Ascending aorta (tissue), 2 donors: ENCODE measurements at regions of chr10 and their contacts with region 1.

Region 1: GRCh38 chr10:81135851-81136250 is 598.1 kb downstream of the SH2D4B start:
- DNase-seq: no peak
- H3K4me3 ChIP-seq: no peak overlapping the region
- H3K27ac ChIP-seq: no peak overlapping the region
- H3K4me1 ChIP-seq: no peaks in the 10 kb centered on the region
- H3K27me3 ChIP-seq: no peaks in the 10 kb centered on the region
- CTCF ChIP-seq: no peak

Region 2: DNA sequence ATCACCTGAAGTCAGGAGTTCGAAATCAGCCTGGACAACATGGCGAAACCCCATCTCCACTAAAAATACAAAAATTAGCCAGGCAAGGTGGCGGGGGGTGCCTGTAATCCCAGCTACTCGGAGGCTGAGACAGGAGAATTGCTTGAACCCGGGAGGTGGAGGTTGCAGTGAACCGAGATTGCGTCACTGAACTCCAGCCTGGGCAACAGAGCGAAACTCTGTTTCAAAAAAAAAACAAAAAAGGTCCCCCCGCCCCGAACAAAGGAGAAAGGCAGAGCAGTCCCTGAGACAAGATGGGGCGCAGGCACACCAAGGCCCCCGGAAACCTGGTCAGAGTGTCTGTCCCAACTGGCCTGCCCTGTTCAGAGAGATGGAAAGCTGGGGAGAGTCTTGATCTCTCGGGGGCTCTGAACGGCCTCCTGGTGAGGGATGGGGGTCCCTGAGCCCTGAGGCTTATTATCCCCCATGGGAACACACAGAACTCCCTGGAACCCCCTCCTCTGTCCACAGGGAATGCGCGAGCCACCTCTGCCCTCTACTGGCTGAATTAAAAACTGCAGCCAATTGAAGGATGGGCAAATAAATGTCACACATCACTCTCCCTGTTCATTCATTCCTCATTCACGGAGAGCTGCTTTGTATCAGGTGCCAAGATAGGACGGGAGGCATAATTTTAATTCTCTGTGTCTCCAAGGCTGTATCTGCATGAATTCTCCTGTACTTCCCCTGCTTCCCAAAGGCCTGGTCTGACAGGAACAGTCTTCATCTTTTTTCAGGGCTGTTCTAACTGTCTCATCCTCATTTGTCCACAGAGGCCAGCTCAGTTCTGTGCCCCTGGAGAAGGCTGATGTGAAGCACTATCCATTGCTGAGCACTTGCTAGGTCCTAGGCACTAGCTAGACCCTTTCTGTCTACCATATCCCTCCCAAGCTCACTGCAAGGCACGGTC is 875.3 kb before region 1 on chr10:
- intact Hi-C with region 1: no loop called
- DNase-seq: no peak
- H3K4me3 ChIP-seq: no peak overlapping the region
- H3K27ac ChIP-seq: no peak overlapping the region
- H3K4me1 ChIP-seq: no peaks in the 10 kb centered on the region
- H3K27me3 ChIP-seq: no peaks in the 10 kb centered on the region
- CTCF ChIP-seq: peak; percentile 43 to 83 (median 55)

Region 3: GRCh38 chr10:81021428-81022129 is 114.3 kb before region 1 on chr10:
- intact Hi-C with region 1: no loop called
- DNase-seq: no peak
- H3K4me3 ChIP-seq: no peak overlapping the region
- H3K27ac ChIP-seq: no peak overlapping the region
- H3K4me1 ChIP-seq: no peaks in the 10 kb centered on the region
- H3K27me3 ChIP-seq: no peaks in the 10 kb centered on the region
- CTCF ChIP-seq: no peak

Region 4: GRCh38 chr10:81068460-81068859 is 67.4 kb before region 1 on chr10:
- intact Hi-C with region 1: no loop called
- DNase-seq: no peak
- H3K4me3 ChIP-seq: no peak overlapping the region
- H3K27ac ChIP-seq: no peak overlapping the region
- H3K4me1 ChIP-seq: no peaks in the 10 kb centered on the region
- H3K27me3 ChIP-seq: no peaks in the 10 kb centered on the region
- CTCF ChIP-seq: no peak

Region 5: DNA sequence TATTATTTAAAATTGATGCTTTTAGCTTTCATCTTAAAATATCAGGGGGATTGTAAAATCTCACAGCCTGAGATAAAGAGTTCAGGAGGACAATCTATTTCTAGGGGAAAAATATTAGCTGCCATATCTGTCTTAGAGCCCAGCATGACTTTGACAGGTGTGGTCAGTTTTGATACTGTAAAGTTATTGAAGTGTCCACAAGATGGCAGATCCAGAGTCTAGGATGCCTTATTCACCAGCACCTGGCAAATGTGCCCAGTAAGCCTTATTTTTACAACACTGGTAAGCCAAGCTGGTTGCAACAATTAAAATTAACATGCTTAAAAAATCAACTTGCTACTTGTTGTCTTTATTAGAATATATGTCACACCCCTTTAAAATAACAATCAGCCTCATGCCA is 18.9 kb before region 1 on chr10:
- intact Hi-C with region 1: loop called (anchors 2 kb)
- DNase-seq: no peak
- H3K4me3 ChIP-seq: no peak overlapping the region
- H3K27ac ChIP-seq: no peak overlapping the region
- H3K4me1 ChIP-seq: no peaks in the 10 kb centered on the region
- H3K27me3 ChIP-seq: no peaks in the 10 kb centered on the region
- CTCF ChIP-seq: no peak

Region 6: GRCh38 chr10:81152656-81153055 is 16.8 kb after region 1 on chr10:
- intact Hi-C with region 1: loop called (anchors 1 kb)
- DNase-seq: no peak
- H3K4me3 ChIP-seq: no peak overlapping the region
- H3K27ac ChIP-seq: no peak overlapping the region
- H3K4me1 ChIP-seq: no peaks in the 10 kb centered on the region
- H3K27me3 ChIP-seq: no peaks in the 10 kb centered on the region
- CTCF ChIP-seq: no peak